Activated naive CD4-positive, alpha-beta T cell treated with anti-CD3 and anti-CD28 coated beads, Interleukin-2, amount 10 ng/mL, durations not matched to agents 7 days and 5 days (primary cell): ENCODE measurements at regions of chr1 and their contacts with region 1.

Region 1: GRCh38 chr1:210360852-210361477 is 32.3 kb downstream of the HHAT start:
- DNase-seq: no peak
- H3K4me3 Mint-ChIP-seq: no peak overlapping the region
- H3K27ac Mint-ChIP-seq: no peak overlapping the region
- H3K4me1 Mint-ChIP-seq: no peaks in the 10 kb centered on the region
- H3K27me3 Mint-ChIP-seq: no peaks in the 10 kb centered on the region

Region 2: GRCh38 chr1:210332719-210333398 is 28.1 kb before region 1 on chr1:
- CTCF ChIA-PET with region 1: interaction called, 14 read pairs
- DNase-seq: peak; percentile 72
- H3K4me3 Mint-ChIP-seq: no peak overlapping the region
- H3K27ac Mint-ChIP-seq: no peak overlapping the region
- H3K4me1 Mint-ChIP-seq: peaks cover 38% of the 10 kb centered on the region
- H3K27me3 Mint-ChIP-seq: peaks cover 26% of the 10 kb centered on the region

Region 3: GRCh38 chr1:210400043-210400840 is 39.3 kb after region 1 on chr1:
- CTCF ChIA-PET with region 1: interaction called, 21 read pairs
- DNase-seq: peak; percentile 61
- H3K4me3 Mint-ChIP-seq: no peak overlapping the region
- H3K27ac Mint-ChIP-seq: no peak overlapping the region
- H3K4me1 Mint-ChIP-seq: peaks cover 22% of the 10 kb centered on the region
- H3K27me3 Mint-ChIP-seq: no peaks in the 10 kb centered on the region

Region 4: GRCh38 chr1:210415846-210416448 is 55.0 kb after region 1 on chr1:
- CTCF ChIA-PET with region 1: no interaction called
- DNase-seq: no peak
- H3K4me3 Mint-ChIP-seq: no peak overlapping the region
- H3K27ac Mint-ChIP-seq: no peak overlapping the region
- H3K4me1 Mint-ChIP-seq: no peaks in the 10 kb centered on the region
- H3K27me3 Mint-ChIP-seq: no peaks in the 10 kb centered on the region